BJ (cell line): ENCODE measurements at regions of chr4 and their contacts with region 1.

Region 1: GRCh38 chr4:124334119-124334518 is 378.4 kb downstream of the ANKRD50 start:
- DNase-seq: peak; percentile 48
- H3K4me3 ChIP-seq: no peak overlapping the region
- H3K27me3 ChIP-seq: no peaks in the 10 kb centered on the region
- CTCF ChIP-seq: peak; percentile 55

Region 2: DNA sequence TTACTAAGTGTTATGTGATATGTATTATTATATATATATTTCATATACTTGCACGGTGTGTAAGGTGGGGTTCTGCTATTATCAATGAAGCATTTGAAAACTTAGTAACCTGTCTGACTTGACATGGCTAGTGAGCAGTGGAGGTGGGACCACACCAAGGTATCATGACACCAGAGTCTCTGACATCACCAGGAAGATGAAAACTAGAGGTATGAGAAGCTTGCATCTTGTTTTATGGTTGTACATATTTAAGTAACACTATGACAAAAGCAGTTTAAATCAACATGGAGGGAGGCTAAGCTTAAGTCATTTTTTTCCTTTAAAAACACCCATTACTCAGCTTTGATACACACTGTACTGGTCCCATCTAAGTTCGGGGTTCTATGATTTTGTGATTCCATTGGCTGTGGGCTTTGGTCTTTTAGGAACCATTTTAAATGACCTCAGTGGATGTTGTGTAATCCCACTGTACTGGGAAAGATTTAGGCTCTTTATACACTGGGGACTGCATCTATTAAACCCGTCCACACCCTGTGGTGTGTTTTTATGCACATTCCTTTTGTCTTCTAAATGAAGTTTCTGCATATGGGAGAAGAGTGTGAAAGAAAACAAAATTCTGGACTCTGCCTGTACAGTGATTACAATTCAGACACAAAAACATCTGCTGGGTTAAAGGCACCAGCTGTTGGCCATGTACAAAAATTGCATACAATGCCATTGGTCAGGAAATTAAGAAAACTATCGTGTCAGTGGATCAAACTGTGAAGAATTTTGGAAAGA is 366.9 kb before region 1 on chr4:
- CTCF ChIA-PET with region 1: no interaction called
- POLR2A ChIA-PET with region 1: no interaction called
- DNase-seq: no peak
- H3K4me3 ChIP-seq: no peak overlapping the region
- H3K27me3 ChIP-seq: no peaks in the 10 kb centered on the region
- CTCF ChIP-seq: no peak

Region 3: GRCh38 chr4:124202099-124202498 is 132.0 kb before region 1 on chr4:
- CTCF ChIA-PET with region 1: no interaction called
- POLR2A ChIA-PET with region 1: no interaction called
- DNase-seq: no peak
- H3K4me3 ChIP-seq: no peak overlapping the region
- H3K27me3 ChIP-seq: no peaks in the 10 kb centered on the region
- CTCF ChIP-seq: peak; percentile 33; the same call in 1 of the 2 replicates

Region 4: DNA sequence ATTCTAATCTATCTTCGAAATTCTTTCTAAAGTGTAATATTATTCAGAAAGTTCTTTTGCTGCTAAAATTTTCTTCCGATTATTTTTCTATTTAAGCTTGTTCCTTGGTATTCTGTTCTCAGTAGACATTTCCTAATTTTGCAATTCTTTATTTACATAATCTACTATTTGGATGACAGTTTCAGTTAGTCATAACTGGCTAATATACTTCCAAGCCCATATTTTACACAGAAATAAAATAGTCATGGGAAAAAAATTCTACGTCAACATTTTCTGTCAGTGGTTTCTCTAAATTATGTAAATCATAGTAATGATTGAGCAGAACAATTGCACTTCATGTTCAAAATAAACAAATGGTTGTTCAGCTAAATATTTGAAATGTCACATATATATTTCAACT is 556.4 kb after region 1 on chr4:
- CTCF ChIA-PET with region 1: no interaction called
- POLR2A ChIA-PET with region 1: no interaction called
- DNase-seq: no peak
- H3K4me3 ChIP-seq: no peak overlapping the region
- H3K27me3 ChIP-seq: no peaks in the 10 kb centered on the region
- CTCF ChIP-seq: no peak

Region 5: GRCh38 chr4:125244848-125245450 is 910.8 kb after region 1 on chr4:
- CTCF ChIA-PET with region 1: interaction called, 16 read pairs
- POLR2A ChIA-PET with region 1: no interaction called
- DNase-seq: no peak
- H3K4me3 ChIP-seq: no peak overlapping the region
- H3K27me3 ChIP-seq: no peaks in the 10 kb centered on the region
- CTCF ChIP-seq: peak; percentile 34

Region 6: DNA sequence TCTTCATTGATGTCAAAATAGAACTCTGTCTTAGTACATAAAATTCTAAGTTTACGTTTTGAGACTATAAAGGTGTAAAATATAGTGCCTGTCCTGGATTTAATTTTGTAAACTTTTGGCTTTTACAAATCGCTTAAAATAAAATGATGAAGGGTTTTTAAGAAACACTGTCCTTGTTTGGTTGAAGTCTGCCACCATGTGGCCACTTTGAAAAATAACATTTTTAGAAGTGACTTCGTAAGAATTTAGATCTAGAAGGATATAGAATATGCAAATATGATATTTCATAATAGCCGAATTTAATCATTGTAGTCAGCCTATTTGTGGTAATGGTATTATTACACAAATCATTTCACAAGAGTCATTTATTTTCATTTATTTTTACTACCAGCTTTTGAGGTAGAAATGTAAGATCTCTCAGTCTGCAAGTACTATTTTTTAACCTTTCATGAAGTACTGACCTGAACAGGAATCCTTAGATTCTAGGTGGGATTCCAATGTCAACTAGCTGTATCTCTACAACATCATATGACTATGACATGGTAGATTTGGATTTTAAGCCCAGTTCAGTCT is 949.7 kb after region 1 on chr4:
- CTCF ChIA-PET with region 1: interaction called, 34 read pairs
- POLR2A ChIA-PET with region 1: no interaction called
- DNase-seq: no peak
- H3K4me3 ChIP-seq: no peak overlapping the region
- H3K27me3 ChIP-seq: no peaks in the 10 kb centered on the region
- CTCF ChIP-seq: peak; percentile 32